ENCODE measurements at regions of chr9 and their contacts with region 1.

Region 1: DNA sequence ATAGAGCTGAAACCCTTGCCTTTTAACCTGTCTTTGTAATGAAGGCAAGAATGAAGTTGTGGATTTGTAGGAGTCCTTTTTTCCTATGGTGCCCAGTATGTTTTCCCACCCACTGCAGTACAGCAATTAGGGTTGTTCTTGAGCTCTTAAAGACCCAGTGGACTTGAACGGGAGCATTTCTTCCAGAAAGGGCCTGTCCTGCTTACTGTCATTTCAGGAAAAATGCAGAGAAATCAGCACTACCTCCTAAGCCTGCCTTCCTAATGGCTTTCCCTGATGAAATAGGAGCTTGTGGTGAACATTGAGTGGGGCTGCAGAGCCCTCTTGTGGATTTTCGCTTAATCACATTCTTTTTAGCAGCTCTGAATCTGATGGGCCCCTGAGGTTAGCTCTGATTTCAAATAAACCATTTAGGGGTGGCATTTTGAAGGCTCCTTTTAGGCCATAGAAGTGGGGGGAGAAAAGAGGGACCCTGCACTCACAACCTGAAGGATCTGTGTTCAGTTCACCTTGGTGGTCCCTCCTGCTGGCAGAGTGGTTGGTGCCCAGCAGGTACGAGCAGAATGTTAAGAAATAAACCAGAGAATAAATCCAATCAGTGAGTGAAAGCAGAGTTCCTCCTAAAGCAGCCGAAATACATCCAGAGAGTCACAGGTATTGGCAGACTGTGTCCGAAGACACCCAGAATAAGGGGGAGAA is 188.0 kb upstream of the KLF9 start:
- DNase-seq: peak in 4 of 5 donors; percentile 43 to 60 (median 47)
- H3K4me3 ChIP-seq: no peak overlapping the region
- H3K4me3 Mint-ChIP-seq: no peak overlapping the region
- H3K27ac ChIP-seq: no peak overlapping the region
- H3K27ac Mint-ChIP-seq: peak overlapping the region in 1 of 7 donors; percentile 49
- H3K4me1 ChIP-seq: no peaks in the 10 kb centered on the region
- H3K4me1 Mint-ChIP-seq: no peaks in the 10 kb centered on the region
- H3K27me3 ChIP-seq: no peaks in the 10 kb centered on the region
- H3K27me3 Mint-ChIP-seq: peaks cover 0 to 1% of the 10 kb centered on the region in 2 donors

Region 2: DNA sequence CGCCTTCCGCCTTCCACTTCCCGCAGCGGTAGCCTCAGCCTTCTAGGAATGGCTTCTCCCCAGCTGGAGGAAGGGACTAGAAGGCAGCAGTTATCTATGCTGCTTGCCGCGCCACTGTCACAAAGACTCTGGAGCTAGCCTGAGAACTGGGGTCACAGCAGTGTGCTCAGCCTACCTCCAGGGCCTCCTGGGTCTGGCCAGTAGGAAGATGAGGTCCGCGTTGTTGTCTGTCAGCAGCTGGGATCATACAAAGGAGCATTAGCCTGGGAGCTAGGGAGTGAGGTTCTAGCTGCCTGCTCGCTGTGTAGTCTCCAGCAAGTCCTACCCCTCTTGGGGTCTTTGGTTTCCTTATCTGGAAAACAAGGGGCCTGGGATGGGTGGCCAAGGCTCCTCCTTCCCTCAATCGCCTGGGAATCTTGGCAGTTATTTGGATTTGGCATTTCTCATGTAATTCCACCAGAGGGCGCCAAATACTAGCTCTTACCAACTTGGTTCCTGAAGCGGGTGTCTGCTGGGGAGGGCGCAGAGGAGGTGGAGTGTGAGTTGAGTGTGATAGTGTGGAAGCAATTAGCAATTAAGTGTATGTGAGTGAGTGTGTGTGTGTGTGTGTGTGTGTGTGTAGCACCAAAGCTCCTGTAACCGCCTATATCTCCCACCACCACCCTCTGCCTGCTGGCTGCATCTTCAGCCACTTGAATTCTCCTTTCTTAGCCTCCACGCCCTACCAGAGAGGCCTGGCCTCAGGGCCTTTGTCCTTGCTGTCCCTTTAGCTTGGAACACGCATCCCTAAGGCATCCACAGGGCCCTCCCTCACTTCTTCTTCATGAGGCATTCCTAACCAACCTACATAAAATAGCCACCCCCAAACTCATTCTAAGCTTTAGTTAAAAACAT is 1180.3 kb before region 1 on chr9:
- CTCF ChIA-PET with region 1: interaction called, 6 read pairs
- POLR2A ChIA-PET with region 1: no interaction called
- intact Hi-C with region 1: loop called (anchors 5 kb)
- DNase-seq: peak in 4 of 5 donors; percentile 41 to 46 (median 44)
- H3K4me3 ChIP-seq: no peak overlapping the region
- H3K4me3 Mint-ChIP-seq: no peak overlapping the region
- H3K27ac ChIP-seq: no peak overlapping the region
- H3K27ac Mint-ChIP-seq: no peak overlapping the region
- H3K4me1 ChIP-seq: no peaks in the 10 kb centered on the region
- H3K4me1 Mint-ChIP-seq: peaks cover 0 to 4% (median under 1%) of the 10 kb centered on the region in 4 donors
- H3K27me3 ChIP-seq: no peaks in the 10 kb centered on the region
- H3K27me3 Mint-ChIP-seq: peaks cover 4 to 18% of the 10 kb centered on the region in 2 donors

Region 3: GRCh38 chr9:70111042-70111602 is 491.3 kb before region 1 on chr9:
- CTCF ChIA-PET with region 1: interaction called, 15 read pairs
- POLR2A ChIA-PET with region 1: no interaction called
- intact Hi-C with region 1: no loop called
- DNase-seq: peak in 4 of 5 donors; percentile 21 to 26 (median 24)
- H3K4me3 ChIP-seq: no peak overlapping the region
- H3K4me3 Mint-ChIP-seq: no peak overlapping the region
- H3K27ac ChIP-seq: no peak overlapping the region
- H3K27ac Mint-ChIP-seq: no peak overlapping the region
- H3K4me1 ChIP-seq: no peaks in the 10 kb centered on the region
- H3K4me1 Mint-ChIP-seq: peaks cover 6 to 11% (median 9%) of the 10 kb centered on the region in 4 donors
- H3K27me3 ChIP-seq: no peaks in the 10 kb centered on the region
- H3K27me3 Mint-ChIP-seq: peaks cover 10 to 17% of the 10 kb centered on the region in 2 donors

Region 4: GRCh38 chr9:70340572-70340971 is 261.9 kb before region 1 on chr9:
- CTCF ChIA-PET with region 1: interaction called, 95 read pairs
- POLR2A ChIA-PET with region 1: interaction called, 6 read pairs
- intact Hi-C with region 1: loop called (anchors 1 kb)
- DNase-seq: peak in 4 of 5 donors; percentile 13 to 18 (median 16)
- H3K4me3 ChIP-seq: no peak overlapping the region
- H3K4me3 Mint-ChIP-seq: no peak overlapping the region
- H3K27ac ChIP-seq: no peak overlapping the region
- H3K27ac Mint-ChIP-seq: no peak overlapping the region
- H3K4me1 ChIP-seq: peaks cover 3% of the 10 kb centered on the region
- H3K4me1 Mint-ChIP-seq: peaks cover 0 to 4% (median 2%) of the 10 kb centered on the region in 4 donors
- H3K27me3 ChIP-seq: no peaks in the 10 kb centered on the region
- H3K27me3 Mint-ChIP-seq: no peaks in the 10 kb centered on the region

Region 5: DNA sequence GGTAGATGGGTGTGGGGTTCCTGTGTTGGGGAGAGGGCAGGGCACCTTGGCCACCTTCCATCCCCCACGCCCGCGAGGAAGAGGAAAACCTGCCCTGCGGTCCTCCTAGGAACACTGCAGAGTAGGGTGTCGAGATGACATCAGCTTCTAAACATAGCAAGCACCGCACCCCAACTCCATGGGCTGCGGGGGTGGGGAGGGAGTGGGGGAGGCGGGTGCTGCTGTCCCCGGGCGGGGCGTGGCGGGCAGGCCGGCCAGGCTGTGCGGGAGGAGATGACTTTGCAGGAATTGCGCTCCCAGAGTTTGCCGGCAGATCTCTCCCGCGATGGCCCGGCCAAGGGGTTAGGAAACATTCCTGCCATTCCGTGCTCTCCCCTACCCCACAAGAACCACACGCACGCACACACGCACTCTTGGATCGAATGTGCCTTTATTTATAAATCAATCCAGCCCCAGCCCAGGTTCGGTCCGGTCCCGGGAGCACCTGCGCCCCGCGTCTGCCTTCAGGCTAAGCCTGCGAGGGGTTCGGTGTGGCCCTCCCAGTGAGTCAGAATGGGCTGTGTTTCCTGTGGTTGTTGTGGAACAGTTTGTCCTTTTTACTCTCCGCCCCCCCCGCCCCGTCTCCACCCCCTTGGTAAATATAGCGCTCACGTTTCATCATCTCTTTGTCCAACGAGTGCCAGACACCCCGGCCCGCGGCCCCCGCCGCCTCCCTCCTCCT is 182.8 kb before region 1 on chr9:
- CTCF ChIA-PET with region 1: interaction called, 10 read pairs
- POLR2A ChIA-PET with region 1: interaction called, 10 read pairs
- intact Hi-C with region 1: loop called (anchors 1 kb)
- DNase-seq: peak; percentile 85 to 97 (median 87)
- H3K4me3 ChIP-seq: peak overlapping the region; percentile 49 to 74
- H3K4me3 Mint-ChIP-seq: peak overlapping the region; percentile 90 to 98 (median 96)
- H3K27ac ChIP-seq: peak overlapping the region; percentile 91
- H3K27ac Mint-ChIP-seq: peak overlapping the region; percentile 99 to 100 (median 99)
- H3K4me1 ChIP-seq: peaks cover 44% of the 10 kb centered on the region
- H3K4me1 Mint-ChIP-seq: peaks cover 32 to 62% (median 41%) of the 10 kb centered on the region in 4 donors
- H3K27me3 ChIP-seq: no peaks in the 10 kb centered on the region
- H3K27me3 Mint-ChIP-seq: no peaks in the 10 kb centered on the region

Region 6: GRCh38 chr9:70614786-70615463 is 12.5 kb after region 1 on chr9:
- CTCF ChIA-PET with region 1: interaction called, 13 read pairs
- POLR2A ChIA-PET with region 1: no interaction called
- intact Hi-C with region 1: no loop called
- DNase-seq: no peak
- H3K4me3 ChIP-seq: no peak overlapping the region
- H3K4me3 Mint-ChIP-seq: no peak overlapping the region
- H3K27ac ChIP-seq: no peak overlapping the region
- H3K27ac Mint-ChIP-seq: no peak overlapping the region
- H3K4me1 ChIP-seq: no peaks in the 10 kb centered on the region
- H3K4me1 Mint-ChIP-seq: no peaks in the 10 kb centered on the region
- H3K27me3 ChIP-seq: no peaks in the 10 kb centered on the region
- H3K27me3 Mint-ChIP-seq: peaks cover 1 to 2% of the 10 kb centered on the region in 2 donors

Measured in CD4-positive, alpha-beta memory T cell (primary cell).